Esophagus squamous epithelium (tissue), 5 donors: ENCODE measurements at regions of chr6 and their contacts with region 1.

Region 1: GRCh38 chr6:159761873-159762680 is at the start of gene ACAT2:
- DNase-seq: peak; percentile 73
- H3K4me3 ChIP-seq: peak within 1 kb of the TSS; percentile 86 to 95 (median 88)
- H3K27ac ChIP-seq: peak within 1 kb of the TSS; percentile 92 to 100 (median 99)
- H3K4me1 ChIP-seq: peaks cover 14 to 37% (median 21%) of the 10 kb centered on the region in 3 donors
- H3K27me3 ChIP-seq: no peaks in the 10 kb centered on the region
- CTCF ChIP-seq: peak in 1 of 6 experiments; percentile 9
- POLR2A ChIP-seq: peak in 1 of 4 donors; percentile 70
- total RNA-seq, gene ACAT2: 24.9 to 56.8 (median 40.8) TPM

Region 2: GRCh38 chr6:159693128-159693893 is 68.8 kb before region 1 on chr6 and contains the start of gene SOD2:
- intact Hi-C with region 1: loop called (anchors 10 kb)
- DNase-seq: peak; percentile 54
- H3K4me3 ChIP-seq: peak within 1 kb of the TSS; percentile 73 to 92 (median 80)
- H3K27ac ChIP-seq: peak within 1 kb of the TSS; percentile 95 to 97 (median 96)
- H3K4me1 ChIP-seq: peaks cover 7 to 57% (median 26%) of the 10 kb centered on the region in 3 donors
- H3K27me3 ChIP-seq: no peaks in the 10 kb centered on the region
- CTCF ChIP-seq: peak in 1 of 6 experiments; percentile 16
- POLR2A ChIP-seq: peak in 3 of 4 donors; percentile 33 to 91 (median 87)
- total RNA-seq, gene SOD2: 227 to 792 (median 519) TPM